HepG2 (cell line): ENCODE measurements at regions of chr20 and their contacts with region 1.

Region 1: DNA sequence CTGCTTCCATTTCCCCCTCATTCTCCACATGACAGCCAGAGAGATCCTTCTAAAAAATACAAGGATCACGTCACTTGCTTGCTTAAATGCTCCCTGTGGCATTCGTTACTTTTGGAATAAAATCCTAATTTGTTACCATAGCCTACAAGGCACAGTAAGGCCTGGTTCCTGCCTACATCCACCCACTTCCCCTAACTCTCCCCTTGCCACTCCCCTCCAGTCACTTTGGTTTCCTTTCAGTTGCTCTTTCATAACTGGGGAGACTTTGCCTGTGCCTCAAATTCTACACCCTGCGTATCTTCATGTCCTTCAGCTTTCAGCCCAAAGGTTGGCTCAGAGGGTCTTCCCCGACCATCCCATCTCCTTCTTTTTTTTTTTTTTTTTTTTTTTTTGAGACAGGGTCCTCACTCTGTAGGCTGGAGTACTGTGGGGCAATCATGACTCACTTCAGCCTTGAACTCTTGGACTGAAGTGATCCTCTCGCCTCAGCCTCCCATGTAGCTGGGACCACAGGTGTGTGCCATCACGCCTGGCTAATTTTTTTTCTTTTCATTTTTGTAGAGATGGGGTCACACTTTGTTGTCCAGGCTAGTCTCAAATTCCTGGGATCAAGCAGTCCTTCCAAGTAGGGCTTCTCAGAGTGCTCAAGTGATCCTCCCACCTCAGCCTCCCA is 12.5 kb downstream of the ID1 start:
- DNase-seq: no peak
- ATAC-seq: no peak
- H3K4me3 ChIP-seq: no peak overlapping the region
- H3K27ac ChIP-seq: no peak overlapping the region
- H3K4me1 ChIP-seq: peaks cover 57% of the 10 kb centered on the region
- H3K27me3 ChIP-seq: no peaks in the 10 kb centered on the region
- CTCF ChIP-seq: no peak
- EP300 ChIP-seq: no peak
- POLR2A ChIP-seq: no peak
- RAD21 ChIP-seq: no peak

Region 2: GRCh38 chr20:31514159-31515071 is 103.2 kb before region 1 on chr20 and contains the start of gene HM13:
- CTCF ChIA-PET with region 1: interaction called, 8 read pairs
- POLR2A ChIA-PET with region 1: interaction called, 5 read pairs
- in situ Hi-C with region 1: no loop called
- intact Hi-C with region 1: loop called (anchors 10 kb)
- DNase-seq: peak; percentile 93
- ATAC-seq: peak; percentile 88
- H3K4me3 ChIP-seq: peak within 1 kb of the TSS; percentile 83 to 96 (median 92)
- H3K27ac ChIP-seq: peak within 1 kb of the TSS; percentile 75
- H3K4me1 ChIP-seq: peaks cover 39% of the 10 kb centered on the region
- H3K27me3 ChIP-seq: no peaks in the 10 kb centered on the region; a peak in 1 of 5 replicates
- CTCF ChIP-seq: peak; percentile 94
- EP300 ChIP-seq: peak in 1 of 2 experiments; percentile 59; a peak in 3 of 4 replicates
- POLR2A ChIP-seq: peak; percentile 99 to 100
- RAD21 ChIP-seq: peak; percentile 75
- total RNA-seq, gene HM13: 68.4 and 118 TPM in 2 replicates

Region 3: GRCh38 chr20:31560094-31560899 is 57.3 kb before region 1 on chr20:
- CTCF ChIA-PET with region 1: interaction called, 454 read pairs
- POLR2A ChIA-PET with region 1: interaction called, 1,427 read pairs
- in situ Hi-C with region 1: loop called (anchors 5 kb)
- intact Hi-C with region 1: loop called (anchors 1 kb)
- DNase-seq: peak; percentile 83
- ATAC-seq: peak; percentile 51
- H3K4me3 ChIP-seq: no peak overlapping the region
- H3K27ac ChIP-seq: peak overlapping the region; percentile 65
- H3K4me1 ChIP-seq: peaks cover 31% of the 10 kb centered on the region
- H3K27me3 ChIP-seq: no peaks in the 10 kb centered on the region
- CTCF ChIP-seq: peak; percentile 95
- EP300 ChIP-seq: peak in 1 of 2 experiments; percentile 33; a peak in 1 of 4 replicates
- POLR2A ChIP-seq: no peak
- RAD21 ChIP-seq: peak; percentile 85